Dorsolateral prefrontal cortex (tissue), 120 donors: ENCODE measurements at regions of chr16 and their contacts with region 1.

Region 1: DNA sequence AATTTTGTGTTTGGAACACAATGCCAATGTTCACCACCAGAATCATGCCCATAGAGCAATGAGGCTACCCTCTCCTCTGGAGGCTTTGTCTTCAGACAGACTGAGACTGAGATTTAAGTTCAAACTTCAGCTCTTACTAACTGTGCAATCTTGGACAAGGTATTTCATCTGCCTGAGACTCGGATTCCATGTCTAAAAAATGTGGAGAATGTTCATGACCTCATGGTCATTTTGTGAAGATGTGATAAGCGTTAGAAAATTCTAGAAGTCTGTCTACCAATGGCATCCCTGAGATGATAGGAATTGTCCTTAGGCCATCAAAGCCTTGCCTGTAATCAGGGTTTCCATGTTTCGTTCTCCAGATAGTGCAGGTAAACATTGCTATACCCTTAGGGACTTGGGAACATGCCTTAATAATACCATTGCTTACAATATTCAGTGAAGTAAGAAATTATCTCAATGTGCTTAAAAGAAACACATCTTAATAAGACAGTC is 388.2 kb upstream of the MAF start:
- DNase-seq: no peak
- H3K4me3 ChIP-seq: no peak overlapping the region
- H3K27ac ChIP-seq: no peak overlapping the region
- H3K27me3 ChIP-seq: peaks cover 0 to 25% (median 0%) of the 10 kb centered on the region in 45 donors
- CTCF ChIP-seq: no peak

Region 2: DNA sequence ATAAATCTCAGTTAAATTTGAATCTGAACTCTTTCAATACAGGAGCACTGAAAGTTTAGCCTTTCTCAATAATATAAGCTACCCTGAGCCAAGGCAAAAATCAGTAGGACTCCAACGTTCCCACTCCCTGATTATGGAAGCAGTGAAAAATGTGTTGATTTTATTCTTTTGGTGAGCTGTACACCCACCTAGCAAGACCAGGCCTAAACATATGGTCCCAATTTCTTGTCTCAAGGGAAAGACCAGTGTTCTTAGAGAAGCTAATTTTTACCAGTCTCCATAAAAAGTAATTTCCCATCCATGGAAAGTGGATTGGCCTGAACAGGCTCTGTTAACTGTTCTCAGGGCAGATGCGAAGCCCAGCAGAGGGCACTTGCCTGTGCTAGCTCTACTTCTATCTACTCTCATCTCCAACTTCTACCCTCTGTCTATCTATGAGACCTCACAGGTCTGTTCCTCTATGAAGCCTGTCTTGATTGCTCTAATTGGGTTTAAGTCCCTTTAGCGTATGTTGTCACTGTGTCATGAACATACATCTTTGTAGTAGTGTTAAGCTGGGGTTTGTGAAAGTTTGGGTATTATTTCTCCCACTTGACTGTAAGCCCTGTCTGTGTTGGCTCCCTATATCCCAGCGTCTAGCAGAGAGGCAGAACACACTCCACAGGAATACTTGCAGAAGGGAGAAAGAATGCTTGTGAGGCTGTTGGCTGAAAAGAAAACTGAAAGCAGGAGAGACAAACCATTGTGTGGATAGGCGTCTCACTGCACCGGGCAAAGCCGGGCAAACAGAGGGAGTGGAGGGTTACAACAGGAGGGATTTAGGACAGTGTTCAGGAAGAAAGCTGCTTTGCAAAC is 221.1 kb before region 1 on chr16:
- intact Hi-C with region 1: loop called in 1 of 2 experiments (anchors 5 kb)
- DNase-seq: peak in 5 of 10 donors; percentile 15 to 56 (median 43)
- H3K4me3 ChIP-seq: peak overlapping the region in 56 of 59 donors; percentile 4 to 62 (median 38)
- H3K27ac ChIP-seq: peak overlapping the region in 57 of 59 donors; percentile 0 to 88 (median 75)
- H3K27me3 ChIP-seq: no peaks in the 10 kb centered on the region
- CTCF ChIP-seq: peak in 46 of 56 donors; percentile 8 to 60 (median 36)

Region 3: GRCh38 chr16:79932572-79932971 is 56.2 kb before region 1 on chr16:
- intact Hi-C with region 1: no loop called
- DNase-seq: no peak
- H3K4me3 ChIP-seq: no peak overlapping the region
- H3K27ac ChIP-seq: no peak overlapping the region
- H3K27me3 ChIP-seq: peaks cover 0 to 56% (median 6%) of the 10 kb centered on the region in 45 donors
- CTCF ChIP-seq: no peak